Natural killer cell (primary cell): ENCODE measurements at regions of chr19 and their contacts with region 1.

Region 1: DNA sequence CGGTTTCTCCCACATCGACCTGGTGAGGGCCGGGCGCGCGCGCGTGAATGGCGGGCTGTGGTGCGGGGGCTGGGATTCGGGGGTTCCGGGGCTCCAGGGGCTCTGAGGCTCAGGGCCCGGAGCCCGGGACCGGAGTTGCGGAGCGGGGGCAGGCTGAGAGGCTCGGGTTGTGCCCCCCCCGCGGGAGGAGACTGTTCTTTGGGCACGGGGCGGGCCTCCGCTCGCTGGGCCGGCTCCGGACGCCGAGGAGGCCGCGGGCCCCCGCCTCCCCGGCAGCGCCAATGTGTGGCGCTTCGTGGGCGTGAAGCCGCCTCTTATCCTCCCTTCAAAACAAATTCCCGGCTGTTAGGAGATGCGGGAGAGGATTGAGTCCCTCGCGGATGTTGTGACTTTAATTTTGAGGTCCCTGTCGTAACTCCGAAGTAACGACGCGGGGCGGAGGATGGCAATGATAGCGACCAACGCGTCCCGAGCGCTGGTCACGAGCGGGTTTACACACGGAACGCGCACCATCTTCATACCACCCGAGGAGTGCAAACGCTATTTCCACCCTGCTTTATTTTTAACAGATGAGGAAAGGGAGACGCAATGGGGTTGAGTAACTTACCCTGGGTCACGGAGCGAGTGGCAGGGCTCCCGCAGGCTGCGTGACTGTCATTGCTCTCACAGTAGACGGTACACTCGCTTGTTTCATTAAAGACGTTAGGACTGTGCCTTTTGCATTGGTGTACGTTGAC is 536 bp downstream of the UBA2 start:
- DNase-seq: peak in 1 of 2 donors; percentile 62
- ATAC-seq: peak; percentile 58 to 71 (median 61)
- H3K4me3 ChIP-seq: peak overlapping the region; percentile 88
- H3K4me3 Mint-ChIP-seq: peak overlapping the region; percentile 91
- H3K27ac ChIP-seq: peak overlapping the region; percentile 85
- H3K27ac Mint-ChIP-seq: peak overlapping the region; percentile 82 to 87
- H3K4me1 ChIP-seq: peaks cover 23% of the 10 kb centered on the region
- H3K4me1 Mint-ChIP-seq: peaks cover 26 to 28% of the 10 kb centered on the region in 2 donors
- H3K27me3 ChIP-seq: no peaks in the 10 kb centered on the region
- H3K27me3 Mint-ChIP-seq: no peaks in the 10 kb centered on the region
- CTCF ChIP-seq: no peak

Region 2: DNA sequence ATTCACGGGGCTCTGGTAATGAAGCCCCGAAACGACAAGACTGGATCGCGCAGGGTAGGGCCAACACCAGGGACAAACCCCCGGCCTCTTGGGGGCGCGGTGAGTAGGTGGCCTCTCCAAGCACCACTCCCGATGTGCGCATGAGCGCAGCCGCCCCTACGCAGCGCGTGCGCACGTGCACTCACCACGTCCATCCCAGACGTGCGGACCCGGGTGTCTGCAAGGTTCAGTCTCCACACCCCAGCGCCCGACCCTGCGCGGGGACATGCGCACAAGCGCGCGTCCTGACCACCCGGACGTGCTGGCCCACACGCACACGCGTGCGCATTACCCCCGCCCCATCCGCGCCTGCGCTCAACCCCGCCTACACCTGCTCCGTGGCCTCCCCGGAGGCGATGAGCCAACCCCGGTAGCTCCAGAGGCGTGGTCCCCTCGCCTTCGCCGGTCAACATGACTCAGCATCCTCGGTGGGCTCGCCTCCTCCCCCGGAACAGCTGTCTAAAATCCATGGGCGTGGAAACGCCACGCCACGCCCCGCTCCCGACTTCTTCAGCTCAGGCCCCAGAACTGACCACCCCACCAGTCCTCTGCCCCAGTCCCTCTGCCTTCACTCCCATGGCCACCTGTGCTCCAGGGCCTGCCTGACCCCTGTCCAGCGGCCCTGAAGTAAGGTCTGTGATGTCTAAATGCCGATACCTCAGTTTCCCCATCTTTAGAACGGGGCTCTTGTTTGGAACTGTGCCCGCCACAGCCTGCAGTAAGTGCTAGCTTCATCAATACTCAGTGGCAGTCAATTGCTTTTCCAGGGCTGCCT is 69.4 kb before region 1 on chr19:
- intact Hi-C with region 1: loop called (anchors 2 kb)
- DNase-seq: peak; percentile 85 to 96
- ATAC-seq: peak; percentile 87 to 93 (median 89)
- H3K4me3 ChIP-seq: peak overlapping the region; percentile 36
- H3K4me3 Mint-ChIP-seq: peak overlapping the region; percentile 95
- H3K27ac ChIP-seq: peak overlapping the region; percentile 69
- H3K27ac Mint-ChIP-seq: peak overlapping the region; percentile 87 to 95
- H3K4me1 ChIP-seq: peaks cover 19% of the 10 kb centered on the region
- H3K4me1 Mint-ChIP-seq: peaks cover 19 to 24% of the 10 kb centered on the region in 2 donors
- H3K27me3 ChIP-seq: no peaks in the 10 kb centered on the region
- H3K27me3 Mint-ChIP-seq: no peaks in the 10 kb centered on the region
- CTCF ChIP-seq: peak; percentile 59

Region 3: DNA sequence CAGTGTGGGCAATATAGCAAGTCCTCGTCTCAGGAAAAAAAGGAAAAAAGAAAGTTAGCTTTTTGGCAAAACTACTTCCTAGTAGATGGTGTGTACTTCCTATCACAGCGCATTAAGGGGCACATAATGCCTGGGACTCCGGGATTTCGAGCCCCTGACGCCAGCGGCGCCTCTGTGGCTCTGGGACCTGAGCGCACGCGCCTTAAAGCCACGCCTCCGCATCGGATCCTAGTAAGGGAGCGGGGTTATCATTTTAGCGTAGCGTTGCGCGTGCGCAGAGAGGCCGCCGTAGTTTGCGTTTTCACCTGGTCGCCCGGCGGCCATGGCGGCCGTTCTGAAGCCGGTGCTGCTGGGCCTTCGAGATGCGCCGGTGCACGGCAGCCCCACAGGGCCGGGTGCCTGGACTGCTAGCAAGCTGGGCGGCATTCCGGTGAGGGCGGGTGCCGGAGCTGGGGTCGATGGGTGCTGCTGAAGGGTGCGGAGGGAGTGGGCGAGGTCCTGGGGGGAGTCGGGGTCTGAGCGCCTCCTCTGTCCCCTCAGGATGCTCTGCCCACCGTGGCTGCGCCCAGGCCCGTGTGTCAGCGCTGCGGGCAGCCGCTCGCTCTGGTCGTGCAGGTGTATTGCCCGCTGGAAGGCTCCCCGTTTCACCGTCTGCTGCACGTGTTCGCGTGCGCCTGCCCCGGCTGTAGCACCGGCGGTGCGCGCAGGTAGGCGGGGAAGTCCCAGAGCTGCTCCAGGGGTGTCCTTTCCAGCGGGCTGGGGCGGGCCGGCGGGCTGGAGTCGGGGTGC is 24.4 kb before region 1 on chr19 and contains the start of gene PDCD2L:
- intact Hi-C with region 1: loop called (anchors 1 kb)
- DNase-seq: peak; percentile 88 to 97
- ATAC-seq: peak; percentile 96
- H3K4me3 ChIP-seq: peak within 1 kb of the TSS; percentile 98
- H3K4me3 Mint-ChIP-seq: peak within 1 kb of the TSS; percentile 96
- H3K27ac ChIP-seq: peak within 1 kb of the TSS; percentile 68
- H3K27ac Mint-ChIP-seq: peak within 1 kb of the TSS; percentile 77 to 91
- H3K4me1 ChIP-seq: peaks cover 18% of the 10 kb centered on the region
- H3K4me1 Mint-ChIP-seq: peaks cover 15 to 19% of the 10 kb centered on the region in 2 donors
- H3K27me3 ChIP-seq: no peaks in the 10 kb centered on the region
- H3K27me3 Mint-ChIP-seq: no peaks in the 10 kb centered on the region
- CTCF ChIP-seq: no peak
- total RNA-seq, gene PDCD2L: 4.7 to 8.6 (median 5.6) TPM

Region 4: DNA sequence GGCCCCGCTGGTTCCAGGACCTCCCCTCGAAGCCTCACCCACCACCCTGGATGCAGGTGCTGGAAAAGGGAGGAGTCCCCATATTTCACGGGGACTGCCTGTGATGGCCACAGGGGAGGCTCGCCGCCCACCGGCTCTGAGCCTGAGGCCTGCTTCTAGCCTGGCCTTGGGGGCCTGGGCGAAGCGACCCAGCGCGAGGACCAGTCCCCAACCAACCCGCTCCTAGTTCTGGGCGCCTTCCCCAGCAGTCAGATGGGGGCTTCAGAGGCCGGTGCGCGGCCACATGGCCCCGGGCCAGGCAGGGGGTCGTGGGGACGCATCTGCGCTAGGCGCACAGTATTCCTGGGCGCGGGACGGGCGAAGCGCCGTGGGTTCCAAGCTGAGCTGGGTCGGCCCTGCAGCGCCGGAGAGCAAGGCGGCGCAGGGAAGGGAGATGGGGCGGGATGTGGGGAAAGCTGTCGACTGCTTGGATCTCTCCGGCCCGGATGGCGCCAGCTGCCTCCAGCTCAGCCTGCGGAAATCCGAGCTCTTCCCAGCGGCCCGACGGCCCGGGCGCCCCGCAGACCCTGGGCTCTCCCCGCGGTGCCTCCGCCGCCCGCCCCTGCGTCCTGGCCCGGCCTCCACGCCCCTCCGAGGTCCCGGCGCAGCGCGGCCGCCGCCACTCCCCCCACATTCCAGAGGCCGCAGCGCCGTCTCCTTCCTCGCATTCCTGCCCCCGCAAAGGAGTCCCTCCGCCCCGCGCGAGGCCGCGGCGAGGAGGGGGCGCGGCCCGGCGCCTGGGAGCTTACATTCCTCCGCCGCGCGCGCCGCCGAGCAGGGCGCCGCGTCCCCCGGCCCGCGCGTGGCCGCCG is 52.5 kb after region 1 on chr19 and contains the start of gene WTIP:
- intact Hi-C with region 1: no loop called
- DNase-seq: no peak
- ATAC-seq: no peak
- H3K4me3 ChIP-seq: no peak within 1 kb of the TSS
- H3K4me3 Mint-ChIP-seq: no peak within 1 kb of the TSS
- H3K27ac ChIP-seq: no peak within 1 kb of the TSS
- H3K27ac Mint-ChIP-seq: no peak within 1 kb of the TSS
- H3K4me1 ChIP-seq: no peaks in the 10 kb centered on the region
- H3K4me1 Mint-ChIP-seq: peaks cover 7 to 12% of the 10 kb centered on the region in 2 donors
- H3K27me3 ChIP-seq: peaks cover 16% of the 10 kb centered on the region
- H3K27me3 Mint-ChIP-seq: peaks cover 34 to 38% of the 10 kb centered on the region in 2 donors
- CTCF ChIP-seq: no peak
- total RNA-seq, gene WTIP: 0.12 to 0.83 (median 0.45) TPM

Region 5: GRCh38 chr19:35195830-35196229 is 767.1 kb after region 1 on chr19:
- intact Hi-C with region 1: no loop called
- DNase-seq: no peak
- ATAC-seq: no peak
- H3K4me3 ChIP-seq: no peak overlapping the region
- H3K4me3 Mint-ChIP-seq: no peak overlapping the region
- H3K27ac ChIP-seq: no peak overlapping the region
- H3K27ac Mint-ChIP-seq: no peak overlapping the region
- H3K4me1 ChIP-seq: no peaks in the 10 kb centered on the region
- H3K4me1 Mint-ChIP-seq: peaks cover 4 to 6% of the 10 kb centered on the region in 2 donors
- H3K27me3 ChIP-seq: no peaks in the 10 kb centered on the region
- H3K27me3 Mint-ChIP-seq: peaks cover 0 to 4% of the 10 kb centered on the region in 2 donors
- CTCF ChIP-seq: no peak